Caco-2 (cell line): ENCODE measurements at regions of chr14 and their contacts with region 1.

Region 1: DNA sequence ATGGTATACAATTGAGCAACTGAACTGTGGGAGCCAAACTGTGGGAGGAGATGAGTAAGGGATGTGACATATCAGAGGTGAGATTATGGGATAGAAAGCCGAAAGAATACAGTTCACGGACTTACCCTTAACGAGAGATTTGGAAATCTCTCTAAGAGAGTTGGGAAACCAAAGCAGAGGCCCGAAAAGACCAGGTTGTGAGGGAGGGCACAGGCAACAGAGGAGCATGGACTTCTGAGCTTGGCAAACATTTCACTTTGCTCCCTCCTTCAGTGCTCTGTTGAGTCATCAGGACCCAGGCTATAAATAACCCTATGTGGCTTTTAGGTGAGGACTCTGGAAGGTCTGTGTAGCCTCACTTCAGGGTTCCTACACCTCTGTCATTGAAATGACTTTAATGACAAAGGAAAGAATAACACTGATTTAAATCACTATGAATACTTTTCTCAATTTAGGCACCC is 120.6 kb downstream of the TGFB3 start:
- DNase-seq: peak; percentile 75 to 78
- H3K4me3 ChIP-seq: no peak overlapping the region
- H3K4me3 Mint-ChIP-seq: peak overlapping the region; percentile 59
- H3K27ac Mint-ChIP-seq: peak overlapping the region; percentile 95
- H3K4me1 ChIP-seq: peaks cover 39% of the 10 kb centered on the region
- H3K4me1 Mint-ChIP-seq: peaks cover 42% of the 10 kb centered on the region
- H3K27me3 ChIP-seq: no peaks in the 10 kb centered on the region
- H3K27me3 Mint-ChIP-seq: no peaks in the 10 kb centered on the region
- CTCF ChIP-seq: no peak

Region 2: DNA sequence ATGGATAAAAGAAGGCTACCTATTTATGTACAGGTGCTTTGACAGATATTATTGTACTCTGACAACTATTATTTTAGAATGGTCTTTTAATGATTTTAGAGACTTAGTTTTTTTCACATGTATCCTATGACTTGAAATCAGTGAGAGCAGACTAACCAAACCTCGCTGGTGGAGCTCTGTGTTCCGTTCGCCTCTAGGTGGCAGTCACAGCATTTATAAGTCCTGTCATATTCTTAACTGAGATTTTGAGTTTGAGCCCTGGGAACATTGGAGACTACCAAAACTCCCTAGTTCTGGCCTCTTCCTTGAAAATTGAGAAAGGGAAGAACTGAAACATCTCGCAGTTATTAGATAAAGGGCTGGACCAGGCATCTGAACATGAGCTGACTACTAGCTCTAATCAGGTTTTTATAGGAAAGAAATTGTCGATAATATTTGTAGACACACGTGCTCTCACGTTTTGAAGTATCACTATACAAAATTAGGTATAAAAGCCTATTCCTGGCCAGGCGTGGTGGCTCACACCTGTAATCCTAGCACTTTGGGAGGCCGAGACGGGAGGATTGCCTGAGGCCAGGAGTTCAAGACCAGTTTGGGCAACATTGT is 151.9 kb before region 1 on chr14:
- CTCF ChIA-PET with region 1: interaction called, 8 read pairs
- POLR2A ChIA-PET with region 1: no interaction called
- intact Hi-C with region 1: loop called (anchors 5 kb)
- DNase-seq: peak; percentile 72 to 74
- H3K4me3 ChIP-seq: no peak overlapping the region
- H3K4me3 Mint-ChIP-seq: no peak overlapping the region
- H3K27ac Mint-ChIP-seq: no peak overlapping the region
- H3K4me1 ChIP-seq: peaks cover 21% of the 10 kb centered on the region
- H3K4me1 Mint-ChIP-seq: peaks cover 24% of the 10 kb centered on the region
- H3K27me3 ChIP-seq: no peaks in the 10 kb centered on the region
- H3K27me3 Mint-ChIP-seq: no peaks in the 10 kb centered on the region
- CTCF ChIP-seq: peak; percentile 69 to 76

Region 3: GRCh38 chr14:75720842-75721498 is 140.2 kb before region 1 on chr14:
- CTCF ChIA-PET with region 1: no interaction called
- POLR2A ChIA-PET with region 1: no interaction called
- intact Hi-C with region 1: no loop called
- DNase-seq: no peak
- H3K4me3 ChIP-seq: no peak overlapping the region
- H3K4me3 Mint-ChIP-seq: no peak overlapping the region
- H3K27ac Mint-ChIP-seq: no peak overlapping the region
- H3K4me1 ChIP-seq: no peaks in the 10 kb centered on the region
- H3K4me1 Mint-ChIP-seq: no peaks in the 10 kb centered on the region
- H3K27me3 ChIP-seq: no peaks in the 10 kb centered on the region
- H3K27me3 Mint-ChIP-seq: no peaks in the 10 kb centered on the region
- CTCF ChIP-seq: no peak

Region 4: GRCh38 chr14:75800792-75801191 is 60.4 kb before region 1 on chr14:
- CTCF ChIA-PET with region 1: interaction called, 50 read pairs
- POLR2A ChIA-PET with region 1: no interaction called
- intact Hi-C with region 1: no loop called
- DNase-seq: peak; percentile 48 to 51
- H3K4me3 ChIP-seq: no peak overlapping the region
- H3K4me3 Mint-ChIP-seq: no peak overlapping the region
- H3K27ac Mint-ChIP-seq: no peak overlapping the region
- H3K4me1 ChIP-seq: no peaks in the 10 kb centered on the region
- H3K4me1 Mint-ChIP-seq: no peaks in the 10 kb centered on the region
- H3K27me3 ChIP-seq: no peaks in the 10 kb centered on the region
- H3K27me3 Mint-ChIP-seq: no peaks in the 10 kb centered on the region
- CTCF ChIP-seq: peak; percentile 23 to 27

Region 5: GRCh38 chr14:75822522-75823141 is 38.6 kb before region 1 on chr14:
- CTCF ChIA-PET with region 1: interaction called, 17 read pairs
- POLR2A ChIA-PET with region 1: interaction called, 9 read pairs
- intact Hi-C with region 1: loop called (anchors 1 kb)
- DNase-seq: no peak
- H3K4me3 ChIP-seq: no peak overlapping the region
- H3K4me3 Mint-ChIP-seq: peak overlapping the region; percentile 8
- H3K27ac Mint-ChIP-seq: peak overlapping the region; percentile 71
- H3K4me1 ChIP-seq: peaks cover 64% of the 10 kb centered on the region
- H3K4me1 Mint-ChIP-seq: peaks cover 38% of the 10 kb centered on the region
- H3K27me3 ChIP-seq: no peaks in the 10 kb centered on the region
- H3K27me3 Mint-ChIP-seq: no peaks in the 10 kb centered on the region
- CTCF ChIP-seq: no peak

Region 6: GRCh38 chr14:75871181-75871880 is 10.1 kb after region 1 on chr14:
- CTCF ChIA-PET with region 1: interaction called, 10 read pairs
- POLR2A ChIA-PET with region 1: interaction called, 9 read pairs
- intact Hi-C with region 1: loop called (anchors 1 kb)
- DNase-seq: peak; percentile 87 to 88
- H3K4me3 ChIP-seq: no peak overlapping the region
- H3K4me3 Mint-ChIP-seq: peak overlapping the region; percentile 22
- H3K27ac Mint-ChIP-seq: peak overlapping the region; percentile 74
- H3K4me1 ChIP-seq: peaks cover 40% of the 10 kb centered on the region
- H3K4me1 Mint-ChIP-seq: peaks cover 37% of the 10 kb centered on the region
- H3K27me3 ChIP-seq: no peaks in the 10 kb centered on the region
- H3K27me3 Mint-ChIP-seq: no peaks in the 10 kb centered on the region
- CTCF ChIP-seq: no peak